ENCODE measurements at regions of chr1 and their contacts with region 1.

Region 1: GRCh38 chr1:206912445-206913095 is 9.2 kb downstream of the FCMR start:
- DNase-seq: peak; percentile 69
- H3K4me3 Mint-ChIP-seq: no peak overlapping the region
- H3K27ac Mint-ChIP-seq: no peak overlapping the region
- H3K4me1 Mint-ChIP-seq: peaks cover 61% of the 10 kb centered on the region
- H3K27me3 Mint-ChIP-seq: no peaks in the 10 kb centered on the region

Region 2: GRCh38 chr1:206635080-206635977 is 277.2 kb before region 1 on chr1 and contains the start of gene DYRK3:
- CTCF ChIA-PET with region 1: interaction called, 16 read pairs
- POLR2A ChIA-PET with region 1: no interaction called
- DNase-seq: peak; percentile 95
- H3K4me3 Mint-ChIP-seq: peak within 1 kb of the TSS; percentile 80
- H3K27ac Mint-ChIP-seq: peak within 1 kb of the TSS; percentile 80
- H3K4me1 Mint-ChIP-seq: peaks cover 36% of the 10 kb centered on the region
- H3K27me3 Mint-ChIP-seq: peaks cover 23% of the 10 kb centered on the region
- total RNA-seq, gene DYRK3: 8.8 to 9.2 TPM

Region 3: GRCh38 chr1:206725109-206725963 is 187.2 kb before region 1 on chr1:
- CTCF ChIA-PET with region 1: interaction called, 158 read pairs
- POLR2A ChIA-PET with region 1: interaction called, 3 read pairs
- DNase-seq: peak; percentile 70
- H3K4me3 Mint-ChIP-seq: no peak overlapping the region
- H3K27ac Mint-ChIP-seq: no peak overlapping the region
- H3K4me1 Mint-ChIP-seq: peaks cover 54% of the 10 kb centered on the region
- H3K27me3 Mint-ChIP-seq: no peaks in the 10 kb centered on the region

Region 4: GRCh38 chr1:206808615-206809014 is 104.0 kb before region 1 on chr1:
- CTCF ChIA-PET with region 1: interaction called, 114 read pairs
- POLR2A ChIA-PET with region 1: interaction called, 6 read pairs
- DNase-seq: peak; percentile 62
- H3K4me3 Mint-ChIP-seq: no peak overlapping the region
- H3K27ac Mint-ChIP-seq: no peak overlapping the region
- H3K4me1 Mint-ChIP-seq: peaks cover 53% of the 10 kb centered on the region
- H3K27me3 Mint-ChIP-seq: no peaks in the 10 kb centered on the region

Region 5: DNA sequence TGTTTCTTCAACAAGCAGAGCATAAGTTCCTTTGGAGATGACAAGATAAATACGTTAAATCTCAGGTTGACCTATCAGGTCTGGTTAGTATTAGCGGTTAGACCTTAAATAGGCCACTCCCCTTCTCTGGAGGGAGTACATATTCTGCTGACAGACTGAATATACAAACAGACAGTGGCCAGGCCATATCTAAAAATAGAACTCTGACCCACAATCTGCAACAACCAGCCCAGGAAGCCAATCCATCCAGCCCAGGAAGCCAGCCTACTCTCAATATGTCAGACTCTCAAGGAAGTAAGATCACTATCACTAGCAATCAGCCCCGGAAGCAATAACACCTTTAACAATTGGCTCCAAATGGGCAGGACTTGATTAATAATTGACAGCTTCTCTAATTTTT is 40.4 kb before region 1 on chr1:
- CTCF ChIA-PET with region 1: interaction called, 10 read pairs
- POLR2A ChIA-PET with region 1: no interaction called
- DNase-seq: no peak
- H3K4me3 Mint-ChIP-seq: no peak overlapping the region
- H3K27ac Mint-ChIP-seq: no peak overlapping the region
- H3K4me1 Mint-ChIP-seq: no peaks in the 10 kb centered on the region
- H3K27me3 Mint-ChIP-seq: peaks cover 17% of the 10 kb centered on the region

Region 6: DNA sequence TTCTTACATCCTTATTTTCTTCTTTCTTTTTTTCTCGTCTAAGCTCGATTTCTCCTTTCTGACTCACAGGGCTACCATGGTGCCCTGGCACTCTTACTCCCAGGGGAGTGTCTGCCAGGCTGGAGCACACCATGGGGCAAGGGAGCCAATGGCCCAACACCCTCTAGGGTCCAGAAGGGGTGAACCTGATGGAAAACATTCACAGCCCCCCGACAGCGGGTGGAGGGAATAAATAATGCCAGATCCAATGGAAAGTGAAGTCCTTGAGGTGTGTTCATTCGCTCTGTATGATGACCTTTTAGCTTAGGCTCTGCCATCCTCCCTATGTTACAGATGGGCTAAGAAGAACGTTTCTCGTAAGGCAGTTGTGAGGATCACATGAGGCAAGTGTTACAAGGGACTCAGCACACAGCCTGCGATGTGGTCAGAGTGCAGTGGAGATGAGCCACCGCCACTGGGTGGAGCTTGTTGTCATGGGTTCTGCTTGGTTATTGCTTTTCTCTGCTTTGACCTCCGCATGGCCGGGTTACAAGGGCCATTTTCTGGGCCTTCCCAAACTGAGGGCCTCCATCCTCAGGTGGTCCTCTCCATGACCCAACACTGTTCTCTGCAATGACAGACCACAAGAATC is 12.7 kb after region 1 on chr1:
- CTCF ChIA-PET with region 1: interaction called, 51 read pairs
- POLR2A ChIA-PET with region 1: interaction called, 33 read pairs
- DNase-seq: peak; percentile 71
- H3K4me3 Mint-ChIP-seq: no peak overlapping the region
- H3K27ac Mint-ChIP-seq: no peak overlapping the region
- H3K4me1 Mint-ChIP-seq: peaks cover 22% of the 10 kb centered on the region
- H3K27me3 Mint-ChIP-seq: no peaks in the 10 kb centered on the region

Region 7: GRCh38 chr1:206941858-206942387 is 29.4 kb after region 1 on chr1:
- CTCF ChIA-PET with region 1: no interaction called
- POLR2A ChIA-PET with region 1: no interaction called
- DNase-seq: no peak
- H3K4me3 Mint-ChIP-seq: no peak overlapping the region
- H3K27ac Mint-ChIP-seq: no peak overlapping the region
- H3K4me1 Mint-ChIP-seq: no peaks in the 10 kb centered on the region
- H3K27me3 Mint-ChIP-seq: peaks cover 21% of the 10 kb centered on the region

Region 8: GRCh38 chr1:207128336-207128921 is 215.9 kb after region 1 on chr1:
- CTCF ChIA-PET with region 1: no interaction called
- POLR2A ChIA-PET with region 1: no interaction called
- DNase-seq: no peak
- H3K4me3 Mint-ChIP-seq: no peak overlapping the region
- H3K27ac Mint-ChIP-seq: no peak overlapping the region
- H3K4me1 Mint-ChIP-seq: no peaks in the 10 kb centered on the region
- H3K27me3 Mint-ChIP-seq: peaks cover 15% of the 10 kb centered on the region